Activated naive CD4-positive, alpha-beta T cell treated with anti-CD3 and anti-CD28 coated beads for 36 hours (primary cell): ENCODE measurements at regions of chr10 and their contacts with region 1.

Region 1: DNA sequence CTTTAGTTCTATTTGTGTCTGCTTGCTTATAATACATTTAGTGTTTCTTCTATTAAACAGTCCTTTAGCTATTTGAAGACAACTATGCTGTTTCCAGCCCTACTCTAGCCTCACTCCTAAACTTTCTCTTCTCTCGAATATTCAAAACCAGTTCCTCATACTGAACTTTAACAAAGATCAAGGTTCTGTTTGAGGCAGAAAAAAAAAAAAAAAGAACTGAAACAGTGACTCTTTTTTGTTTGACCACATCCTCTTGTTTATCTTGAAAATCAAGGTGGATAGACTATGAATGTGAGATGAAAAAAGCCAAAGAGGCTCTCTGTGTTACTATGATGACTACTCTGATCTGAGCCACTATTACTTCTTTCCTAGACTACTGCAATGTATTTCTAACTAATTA is 154.3 kb downstream of the ZNF365 start:
- DNase-seq: no peak
- H3K4me3 Mint-ChIP-seq: peak overlapping the region; percentile 19
- H3K27ac Mint-ChIP-seq: peak overlapping the region; percentile 26
- H3K4me1 Mint-ChIP-seq: peaks cover 37% of the 10 kb centered on the region
- H3K27me3 Mint-ChIP-seq: no peaks in the 10 kb centered on the region

Region 2: GRCh38 chr10:62268399-62269114 is 259.9 kb before region 1 on chr10 and contains the start of gene RTKN2:
- CTCF ChIA-PET with region 1: no interaction called
- intact Hi-C with region 1: loop called (anchors 5 kb)
- DNase-seq: peak; percentile 78
- H3K4me3 Mint-ChIP-seq: peak within 1 kb of the TSS; percentile 72
- H3K27ac Mint-ChIP-seq: peak within 1 kb of the TSS; percentile 28
- H3K4me1 Mint-ChIP-seq: peaks cover 23% of the 10 kb centered on the region
- H3K27me3 Mint-ChIP-seq: peaks cover 13% of the 10 kb centered on the region
- total RNA-seq, gene RTKN2: 4.7 to 5.4 TPM

Region 3: GRCh38 chr10:62811159-62811875 is 282.9 kb after region 1 on chr10:
- CTCF ChIA-PET with region 1: no interaction called
- intact Hi-C with region 1: loop called (anchors 1 kb)
- DNase-seq: peak; percentile 91
- H3K4me3 Mint-ChIP-seq: peak overlapping the region; percentile 30
- H3K27ac Mint-ChIP-seq: peak overlapping the region; percentile 79
- H3K4me1 Mint-ChIP-seq: peaks cover 78% of the 10 kb centered on the region
- H3K27me3 Mint-ChIP-seq: no peaks in the 10 kb centered on the region

Region 4: DNA sequence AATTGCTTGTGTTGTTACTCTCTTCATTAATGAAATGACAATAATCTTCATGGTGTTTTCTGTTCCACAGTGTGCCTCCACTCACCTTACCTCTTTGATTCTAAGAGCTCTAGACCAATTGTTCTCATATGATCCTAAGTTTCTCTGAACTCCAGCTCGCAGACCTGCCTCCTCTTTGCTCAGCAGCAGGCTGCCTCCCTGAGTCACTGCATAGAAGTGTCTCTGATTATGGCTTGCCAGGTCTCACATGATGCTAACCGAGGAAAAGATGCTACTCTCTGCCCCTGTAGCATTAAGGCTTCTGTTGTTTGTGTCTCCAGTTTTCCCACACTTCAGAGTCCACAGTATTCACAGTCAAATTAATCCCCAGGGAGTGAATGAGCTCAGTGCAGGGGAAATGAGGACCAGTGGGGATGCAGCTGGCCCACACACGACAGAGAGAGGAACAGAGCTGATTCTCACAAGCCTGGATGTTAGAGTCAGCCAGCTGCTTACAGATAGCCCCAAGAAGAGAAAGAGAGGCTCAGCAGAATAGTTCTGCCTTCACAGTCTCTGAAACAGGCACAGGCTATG is 433.6 kb after region 1 on chr10:
- CTCF ChIA-PET with region 1: no interaction called
- intact Hi-C with region 1: no loop called
- DNase-seq: no peak
- H3K4me3 Mint-ChIP-seq: no peak overlapping the region
- H3K27ac Mint-ChIP-seq: no peak overlapping the region
- H3K4me1 Mint-ChIP-seq: no peaks in the 10 kb centered on the region
- H3K27me3 Mint-ChIP-seq: peaks cover 27% of the 10 kb centered on the region

Region 5: GRCh38 chr10:62980687-62981086 is 452.2 kb after region 1 on chr10:
- CTCF ChIA-PET with region 1: no interaction called
- intact Hi-C with region 1: loop called (anchors 2 kb)
- DNase-seq: peak; percentile 52
- H3K4me3 Mint-ChIP-seq: no peak overlapping the region
- H3K27ac Mint-ChIP-seq: peak overlapping the region; percentile 76
- H3K4me1 Mint-ChIP-seq: peaks cover 23% of the 10 kb centered on the region
- H3K27me3 Mint-ChIP-seq: peaks cover 8% of the 10 kb centered on the region